A673 (cell line): ENCODE measurements at regions of chr3 and their contacts with region 1.

Region 1: GRCh38 chr3:189947948-189948723 is 172.6 kb downstream of the P3H2 start:
- DNase-seq: peak; percentile 79
- H3K4me3 ChIP-seq: no peak overlapping the region
- H3K27ac ChIP-seq: peak overlapping the region; percentile 61
- H3K4me1 ChIP-seq: peaks cover 21% of the 10 kb centered on the region
- H3K27me3 ChIP-seq: no peaks in the 10 kb centered on the region
- CTCF ChIP-seq: peak; percentile 80

Region 2: DNA sequence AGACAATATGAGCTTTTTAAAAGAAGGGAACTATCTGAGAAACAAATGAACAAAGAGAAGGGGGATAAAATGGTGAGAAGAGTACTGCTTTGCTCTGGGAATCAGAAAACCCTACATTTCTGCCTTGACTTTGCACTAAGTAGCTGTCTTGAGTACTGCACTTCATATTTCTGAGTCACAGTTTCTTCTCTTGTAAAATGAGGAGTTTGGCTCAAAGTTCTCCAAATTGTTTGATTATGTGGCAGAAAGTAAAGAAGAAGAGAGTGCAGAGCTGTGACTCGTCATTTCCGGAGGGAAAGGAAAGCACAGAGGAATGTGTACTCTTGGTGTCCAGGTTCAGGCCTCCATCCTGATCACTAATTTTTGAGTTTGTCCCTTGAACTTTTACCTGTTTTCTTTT is 262.3 kb before region 1 on chr3:
- CTCF ChIA-PET with region 1: no interaction called
- POLR2A ChIA-PET with region 1: no interaction called
- intact Hi-C with region 1: loop called (anchors 10 kb)
- DNase-seq: peak; percentile 46
- H3K4me3 ChIP-seq: no peak overlapping the region
- H3K27ac ChIP-seq: no peak overlapping the region
- H3K4me1 ChIP-seq: peaks cover 27% of the 10 kb centered on the region
- H3K27me3 ChIP-seq: no peaks in the 10 kb centered on the region
- CTCF ChIP-seq: no peak

Region 3: DNA sequence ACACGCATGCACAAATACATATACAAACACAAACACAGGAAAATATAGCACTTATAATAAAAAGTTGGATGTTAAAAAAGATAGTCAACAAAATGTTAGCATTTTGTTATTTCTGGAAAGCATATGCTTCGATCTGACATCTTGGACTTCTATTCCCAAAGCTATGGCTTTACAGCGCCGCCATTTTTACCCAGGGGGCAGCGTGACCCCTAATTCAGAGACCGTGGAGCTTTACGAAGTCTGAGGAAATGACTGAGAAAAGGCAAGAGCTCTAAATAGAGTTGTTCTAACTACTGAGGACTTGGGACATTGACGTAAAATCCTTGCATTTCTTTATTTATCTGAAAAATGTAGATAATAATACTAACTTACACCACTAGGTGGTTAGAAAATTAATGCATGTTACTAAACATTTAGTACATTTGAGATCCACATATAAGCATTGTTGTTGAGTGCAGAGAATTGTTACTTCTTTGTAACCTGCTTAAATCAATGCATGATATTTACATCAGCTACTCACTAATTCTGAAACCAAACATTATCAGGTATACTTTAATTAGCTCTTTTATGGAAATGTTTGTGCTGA is 161.6 kb before region 1 on chr3:
- CTCF ChIA-PET with region 1: no interaction called
- POLR2A ChIA-PET with region 1: no interaction called
- intact Hi-C with region 1: loop called (anchors 5 kb)
- DNase-seq: no peak
- H3K4me3 ChIP-seq: no peak overlapping the region
- H3K27ac ChIP-seq: no peak overlapping the region
- H3K4me1 ChIP-seq: peaks cover 28% of the 10 kb centered on the region
- H3K27me3 ChIP-seq: no peaks in the 10 kb centered on the region
- CTCF ChIP-seq: peak; percentile 50

Region 4: GRCh38 chr3:190467922-190468321 is 519.8 kb after region 1 on chr3:
- CTCF ChIA-PET with region 1: no interaction called
- POLR2A ChIA-PET with region 1: no interaction called
- intact Hi-C with region 1: no loop called
- DNase-seq: no peak
- H3K4me3 ChIP-seq: no peak overlapping the region
- H3K27ac ChIP-seq: no peak overlapping the region
- H3K4me1 ChIP-seq: peaks cover 15% of the 10 kb centered on the region
- H3K27me3 ChIP-seq: no peaks in the 10 kb centered on the region
- CTCF ChIP-seq: no peak